CD4-positive, alpha-beta T cell (primary cell): ENCODE measurements at regions of chr17 and their contacts with region 1.

Region 1: GRCh38 chr17:37089956-37090355 is 141.2 kb downstream of the AATF start:
- DNase-seq: peak in 13 of 14 experiments; percentile 7 to 87 (median 45)
- ATAC-seq: peak; percentile 89
- H3K4me3 ChIP-seq: no peak overlapping the region
- H3K4me3 Mint-ChIP-seq: peak overlapping the region; percentile 54
- H3K27ac ChIP-seq: peak overlapping the region; percentile 56 to 91
- H3K27ac Mint-ChIP-seq: peak overlapping the region; percentile 89
- H3K4me1 ChIP-seq: peaks cover 33% of the 10 kb centered on the region
- H3K4me1 Mint-ChIP-seq: peaks cover 53% of the 10 kb centered on the region
- H3K27me3 ChIP-seq: no peaks in the 10 kb centered on the region
- H3K27me3 Mint-ChIP-seq: no peaks in the 10 kb centered on the region
- CTCF ChIP-seq: no peak

Region 2: DNA sequence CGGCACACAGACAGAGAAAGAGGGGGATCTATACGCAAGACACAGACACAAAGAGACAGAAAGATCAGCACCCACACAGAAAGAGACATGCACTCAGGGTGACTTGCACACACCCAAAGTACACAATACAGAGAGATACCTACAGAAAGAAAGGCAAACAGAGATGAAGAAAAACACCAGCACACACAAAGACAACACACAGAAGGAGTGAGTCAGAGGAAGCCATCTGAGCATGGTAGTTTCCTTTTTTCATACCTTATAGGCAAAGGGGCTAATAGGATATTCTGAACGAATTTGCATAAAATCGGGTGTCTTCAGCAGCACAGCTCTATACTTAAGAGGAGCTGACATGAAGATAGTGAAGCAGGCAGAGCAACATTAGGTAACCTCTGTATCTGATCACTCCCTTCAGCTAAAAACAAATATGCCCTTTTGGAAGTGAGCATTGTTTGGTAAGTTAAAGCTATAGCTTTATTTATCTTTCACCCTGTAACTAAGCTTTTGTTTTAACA is 57.4 kb after region 1 on chr17:
- CTCF ChIA-PET with region 1: no interaction called
- POLR2A ChIA-PET with region 1: no interaction called
- intact Hi-C with region 1: loop called in 1 of 2 experiments (anchors 2 kb)
- DNase-seq: peak in 1 of 14 experiments; percentile 25
- ATAC-seq: peak; percentile 88
- H3K4me3 ChIP-seq: no peak overlapping the region
- H3K4me3 Mint-ChIP-seq: peak overlapping the region; percentile 4
- H3K27ac ChIP-seq: no peak overlapping the region
- H3K27ac Mint-ChIP-seq: peak overlapping the region; percentile 34
- H3K4me1 ChIP-seq: no peaks in the 10 kb centered on the region
- H3K4me1 Mint-ChIP-seq: peaks cover 6% of the 10 kb centered on the region
- H3K27me3 ChIP-seq: no peaks in the 10 kb centered on the region
- H3K27me3 Mint-ChIP-seq: no peaks in the 10 kb centered on the region
- CTCF ChIP-seq: no peak